CD8-positive, alpha-beta memory T cell (primary cell): ENCODE measurements at regions of chr15 and their contacts with region 1.

Region 1: DNA sequence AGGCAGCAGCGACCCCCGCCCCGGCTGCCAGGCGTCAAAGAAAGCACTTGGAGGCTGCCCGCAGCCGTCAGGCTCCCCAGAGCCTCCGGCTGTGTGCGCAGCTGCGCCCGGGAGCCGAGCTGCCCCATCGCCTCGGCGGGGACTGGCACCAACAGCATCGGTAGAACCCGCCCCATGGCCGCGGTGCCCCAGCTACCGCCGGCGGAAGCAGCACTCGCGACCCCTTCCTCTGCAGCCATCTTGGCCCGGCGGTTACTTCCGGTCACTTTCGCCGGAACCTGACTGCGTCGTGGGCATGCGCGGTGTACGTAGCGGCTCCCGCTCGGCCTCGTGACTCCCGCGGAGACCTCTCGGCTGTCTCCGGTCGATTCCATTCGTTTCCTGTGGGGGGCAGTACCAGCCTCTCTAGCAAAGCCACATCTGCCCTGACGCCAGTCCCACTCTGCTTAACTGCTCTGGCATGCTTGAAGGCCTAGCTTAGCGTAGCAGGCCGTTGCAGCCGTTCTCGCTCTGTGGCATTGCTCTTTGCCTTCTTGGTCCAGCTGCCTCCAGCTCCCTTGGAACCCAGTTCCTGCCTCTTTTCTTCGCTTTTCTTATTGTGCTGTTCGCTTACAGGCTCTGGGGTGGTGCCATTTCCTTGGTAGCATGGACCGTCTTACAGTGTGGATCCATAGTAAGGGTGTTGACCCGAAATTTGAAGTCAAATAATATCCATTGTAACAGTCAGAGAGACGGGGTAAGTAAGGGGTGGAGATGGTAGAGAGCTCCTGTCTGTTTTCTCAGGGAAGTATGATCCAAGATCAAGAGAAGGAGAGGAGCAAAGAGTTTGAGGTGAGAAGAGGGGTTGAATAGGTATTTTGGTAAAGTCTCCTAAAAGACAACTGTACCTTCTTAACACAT is at the start of gene SPG11:
- DNase-seq: peak; percentile 90 to 98 (median 92)
- H3K4me3 ChIP-seq: peak within 1 kb of the TSS; percentile 67
- H3K4me3 Mint-ChIP-seq: peak within 1 kb of the TSS; percentile 95 to 99 (median 98)
- H3K27ac ChIP-seq: peak within 1 kb of the TSS; percentile 86
- H3K27ac Mint-ChIP-seq: peak within 1 kb of the TSS; percentile 93 to 98 (median 98)
- H3K4me1 ChIP-seq: peaks cover 61% of the 10 kb centered on the region
- H3K4me1 Mint-ChIP-seq: peaks cover 59 to 80% (median 78%) of the 10 kb centered on the region in 3 donors
- H3K27me3 ChIP-seq: no peaks in the 10 kb centered on the region
- H3K27me3 Mint-ChIP-seq: no peaks in the 10 kb centered on the region
- total RNA-seq, gene SPG11: 60.8 to 62.1 TPM

Region 2: GRCh38 chr15:44641651-44642050 is 22.0 kb before region 1 on chr15:
- CTCF ChIA-PET with region 1: interaction called, 10 read pairs
- POLR2A ChIA-PET with region 1: no interaction called
- DNase-seq: no peak
- H3K4me3 ChIP-seq: no peak overlapping the region
- H3K4me3 Mint-ChIP-seq: peak overlapping the region in 1 of 7 donors; percentile 34
- H3K27ac ChIP-seq: no peak overlapping the region
- H3K27ac Mint-ChIP-seq: peak overlapping the region in 2 of 8 donors; percentile 31 to 61
- H3K4me1 ChIP-seq: no peaks in the 10 kb centered on the region
- H3K4me1 Mint-ChIP-seq: peaks cover 40 to 68% (median 56%) of the 10 kb centered on the region in 3 donors
- H3K27me3 ChIP-seq: no peaks in the 10 kb centered on the region
- H3K27me3 Mint-ChIP-seq: no peaks in the 10 kb centered on the region

Region 3: GRCh38 chr15:44682211-44682610 is 18.6 kb after region 1 on chr15:
- CTCF ChIA-PET with region 1: interaction called, 102 read pairs
- POLR2A ChIA-PET with region 1: interaction called, 33 read pairs
- DNase-seq: no peak
- H3K4me3 ChIP-seq: peak overlapping the region; percentile 3
- H3K4me3 Mint-ChIP-seq: peak overlapping the region in 6 of 7 donors; percentile 62 to 75 (median 72)
- H3K27ac ChIP-seq: peak overlapping the region; percentile 70
- H3K27ac Mint-ChIP-seq: peak overlapping the region; percentile 84 to 97 (median 90)
- H3K4me1 ChIP-seq: peaks cover 72% of the 10 kb centered on the region
- H3K4me1 Mint-ChIP-seq: peaks cover 88 to 97% (median 96%) of the 10 kb centered on the region in 3 donors
- H3K27me3 ChIP-seq: no peaks in the 10 kb centered on the region
- H3K27me3 Mint-ChIP-seq: peaks cover 0 to 2% of the 10 kb centered on the region in 2 donors

Region 4: GRCh38 chr15:44698641-44699040 is 35.0 kb after region 1 on chr15:
- CTCF ChIA-PET with region 1: interaction called, 43 read pairs
- POLR2A ChIA-PET with region 1: interaction called, 3 read pairs
- DNase-seq: no peak
- H3K4me3 ChIP-seq: no peak overlapping the region
- H3K4me3 Mint-ChIP-seq: no peak overlapping the region
- H3K27ac ChIP-seq: no peak overlapping the region
- H3K27ac Mint-ChIP-seq: peak overlapping the region in 2 of 8 donors; percentile 2 to 14
- H3K4me1 ChIP-seq: no peaks in the 10 kb centered on the region
- H3K4me1 Mint-ChIP-seq: peaks cover 34 to 44% (median 38%) of the 10 kb centered on the region in 3 donors
- H3K27me3 ChIP-seq: no peaks in the 10 kb centered on the region
- H3K27me3 Mint-ChIP-seq: no peaks in the 10 kb centered on the region

Region 5: GRCh38 chr15:44728576-44729407 is 65.1 kb after region 1 on chr15:
- CTCF ChIA-PET with region 1: interaction called, 271 read pairs
- POLR2A ChIA-PET with region 1: interaction called, 604 read pairs
- DNase-seq: peak; percentile 86 to 97 (median 97)
- H3K4me3 ChIP-seq: peak overlapping the region; percentile 84
- H3K4me3 Mint-ChIP-seq: peak overlapping the region; percentile 90 to 100 (median 99)
- H3K27ac ChIP-seq: peak overlapping the region; percentile 88
- H3K27ac Mint-ChIP-seq: peak overlapping the region; percentile 96 to 100 (median 99)
- H3K4me1 ChIP-seq: peaks cover 74% of the 10 kb centered on the region
- H3K4me1 Mint-ChIP-seq: peaks cover 70 to 88% (median 86%) of the 10 kb centered on the region in 3 donors
- H3K27me3 ChIP-seq: no peaks in the 10 kb centered on the region
- H3K27me3 Mint-ChIP-seq: peaks cover 0 to 1% of the 10 kb centered on the region in 2 donors

Region 6: GRCh38 chr15:44782516-44782915 is 118.9 kb after region 1 on chr15:
- CTCF ChIA-PET with region 1: interaction called, 10 read pairs
- POLR2A ChIA-PET with region 1: interaction called, 3 read pairs
- DNase-seq: no peak
- H3K4me3 ChIP-seq: no peak overlapping the region
- H3K4me3 Mint-ChIP-seq: peak overlapping the region in 3 of 7 donors; percentile 4 to 92 (median 13)
- H3K27ac ChIP-seq: no peak overlapping the region
- H3K27ac Mint-ChIP-seq: peak overlapping the region in 2 of 8 donors; percentile 2 to 51
- H3K4me1 ChIP-seq: no peaks in the 10 kb centered on the region
- H3K4me1 Mint-ChIP-seq: peaks cover 6 to 17% (median 8%) of the 10 kb centered on the region in 3 donors
- H3K27me3 ChIP-seq: no peaks in the 10 kb centered on the region
- H3K27me3 Mint-ChIP-seq: peaks cover 0 to 2% of the 10 kb centered on the region in 2 donors

Region 7: GRCh38 chr15:44836094-44836493 is 172.4 kb after region 1 on chr15:
- CTCF ChIA-PET with region 1: no interaction called
- POLR2A ChIA-PET with region 1: no interaction called
- DNase-seq: no peak
- H3K4me3 ChIP-seq: no peak overlapping the region
- H3K4me3 Mint-ChIP-seq: no peak overlapping the region
- H3K27ac ChIP-seq: no peak overlapping the region
- H3K27ac Mint-ChIP-seq: peak overlapping the region in 1 of 8 donors; percentile 54
- H3K4me1 ChIP-seq: no peaks in the 10 kb centered on the region
- H3K4me1 Mint-ChIP-seq: peaks cover 1 to 5% (median 4%) of the 10 kb centered on the region in 3 donors
- H3K27me3 ChIP-seq: no peaks in the 10 kb centered on the region
- H3K27me3 Mint-ChIP-seq: no peaks in the 10 kb centered on the region